Activated CD4-positive, alpha-beta T cell treated with anti-CD3 and anti-CD28 coated beads, Interleukin-2, amount 10 ng/mL, durations not matched to agents 24 days and 14 days (primary cell): ENCODE measurements at regions of chr5 and their contacts with region 1.

Region 1: DNA sequence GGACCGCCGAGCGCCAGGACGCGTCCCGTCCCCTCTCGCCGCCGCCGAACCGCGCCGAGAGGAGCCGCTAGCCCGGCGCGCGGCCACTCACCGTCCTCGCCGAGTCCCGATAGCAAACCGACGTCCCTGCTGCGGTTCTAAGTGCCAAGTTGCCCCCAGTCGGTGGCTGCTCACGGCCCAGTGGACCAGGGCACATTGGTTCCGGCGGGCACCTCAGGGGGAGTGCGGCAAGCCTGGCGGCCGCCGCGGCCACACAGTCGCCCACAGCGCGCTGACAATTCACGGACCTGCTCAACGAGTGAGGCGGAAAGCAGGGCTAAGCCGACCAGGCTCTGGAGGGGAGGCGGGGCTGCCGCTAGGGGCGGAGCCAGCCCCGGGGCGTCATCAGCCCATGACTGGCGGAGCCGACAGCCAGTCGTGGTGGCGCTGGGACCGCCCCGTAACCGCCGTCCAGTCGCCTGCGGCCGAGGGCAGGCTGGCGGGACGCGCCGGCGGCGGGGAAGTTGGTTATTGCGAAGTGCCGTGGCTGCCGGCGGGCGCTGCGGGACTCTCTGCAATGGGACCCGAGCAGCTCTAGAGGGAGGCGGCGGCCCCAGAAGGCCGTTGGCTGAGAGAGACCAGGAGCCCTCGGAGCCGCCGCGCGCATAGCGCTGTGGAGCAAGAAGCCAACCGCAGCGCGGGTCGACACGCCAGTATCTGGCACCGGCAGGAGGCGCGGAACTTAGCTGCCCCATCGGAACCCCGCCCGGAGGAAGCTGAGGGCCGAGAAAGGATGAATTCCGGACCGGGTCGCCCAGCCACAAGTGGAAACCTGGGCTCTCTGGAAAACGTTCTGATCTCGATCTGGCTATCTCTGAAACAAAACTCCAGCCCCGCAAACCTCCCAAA is at the start of gene MARCHF3:
- DNase-seq: peak; percentile 99
- H3K4me3 Mint-ChIP-seq: peak within 1 kb of the TSS; percentile 92
- H3K27ac Mint-ChIP-seq: peak within 1 kb of the TSS; percentile 75
- H3K4me1 Mint-ChIP-seq: peaks cover 10% of the 10 kb centered on the region
- H3K27me3 Mint-ChIP-seq: peaks cover 37% of the 10 kb centered on the region
- total RNA-seq, gene MARCHF3: 2.3 and 4.2 TPM in 2 replicates

Region 2: DNA sequence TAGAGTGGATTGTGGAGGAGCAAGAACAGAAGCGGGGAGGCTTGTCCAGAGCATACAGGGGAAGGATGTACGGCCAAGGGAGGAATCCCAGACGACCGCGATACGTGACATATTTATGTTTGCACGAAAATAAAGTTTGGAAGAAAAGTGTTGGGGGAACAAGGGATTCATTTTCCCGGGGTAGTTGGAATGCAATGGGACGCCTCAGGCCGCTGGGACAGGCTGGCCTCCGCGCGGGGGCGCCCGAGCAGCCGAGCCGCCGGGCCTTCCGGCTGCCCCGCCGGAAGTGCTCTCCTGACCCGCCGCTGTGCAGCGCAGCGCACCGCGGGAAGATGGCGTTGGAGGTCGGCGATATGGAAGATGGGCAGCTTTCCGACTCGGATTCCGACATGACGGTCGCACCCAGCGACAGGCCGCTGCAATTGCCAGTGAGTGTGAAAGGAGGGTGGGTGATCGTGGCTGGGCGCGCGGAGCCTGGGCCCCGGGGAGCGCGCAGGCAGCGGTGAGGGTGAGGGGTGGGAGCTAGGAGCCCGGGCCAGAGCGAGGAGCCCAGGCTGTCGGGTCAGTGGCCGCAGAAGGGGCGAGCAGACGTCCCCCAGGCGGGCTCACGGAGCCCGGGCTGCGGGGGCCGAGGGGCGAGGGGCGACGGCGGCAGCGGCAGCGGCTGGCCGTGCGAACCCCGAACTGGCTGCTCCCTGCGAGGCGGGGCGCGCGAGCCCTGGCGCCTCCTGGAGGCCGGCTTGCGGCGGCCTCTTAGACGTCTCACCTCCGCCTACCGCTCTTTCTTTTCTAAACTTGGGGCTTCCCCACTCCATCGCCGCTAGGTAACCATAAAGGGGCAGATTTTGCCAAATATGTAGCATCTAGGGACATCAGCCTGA is 429.6 kb before region 1 on chr5 and contains the start of gene PHAX:
- intact Hi-C with region 1: loop called (anchors 2 kb)
- DNase-seq: peak; percentile 94
- H3K4me3 Mint-ChIP-seq: peak within 1 kb of the TSS; percentile 96
- H3K27ac Mint-ChIP-seq: peak within 1 kb of the TSS; percentile 98
- H3K4me1 Mint-ChIP-seq: peaks cover 24% of the 10 kb centered on the region
- H3K27me3 Mint-ChIP-seq: peaks cover 11% of the 10 kb centered on the region
- total RNA-seq, gene PHAX: 50.2 and 51.7 TPM in 2 replicates

Region 3: GRCh38 chr5:126745259-126745992 is 285.1 kb before region 1 on chr5:
- intact Hi-C with region 1: loop called (anchors 1 kb)
- DNase-seq: no peak
- H3K4me3 Mint-ChIP-seq: no peak overlapping the region
- H3K27ac Mint-ChIP-seq: no peak overlapping the region
- H3K4me1 Mint-ChIP-seq: peaks cover 37% of the 10 kb centered on the region
- H3K27me3 Mint-ChIP-seq: no peaks in the 10 kb centered on the region

Region 4: DNA sequence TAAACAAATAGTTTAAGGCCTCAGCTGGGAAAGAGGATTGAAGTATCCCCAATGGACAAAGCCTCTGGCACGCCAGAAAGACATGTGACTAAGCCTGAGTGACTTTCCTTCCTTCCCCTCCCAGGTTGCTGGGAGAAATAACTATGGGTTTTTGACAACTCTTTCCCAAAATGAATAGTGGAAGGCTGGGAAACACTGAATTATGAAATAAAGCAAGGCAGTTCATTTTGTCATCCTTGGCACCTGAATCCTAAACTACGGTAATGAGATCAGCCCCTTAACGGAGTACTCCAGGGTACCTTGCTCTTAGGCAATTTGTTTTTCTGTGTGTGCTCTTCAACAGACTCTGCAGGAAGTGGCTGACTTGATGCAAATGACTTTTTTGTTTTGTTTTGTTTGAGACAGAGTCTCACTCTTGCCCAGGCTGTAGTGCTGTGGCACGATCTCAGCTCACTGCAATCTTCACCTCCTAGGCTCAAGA is 178.4 kb before region 1 on chr5:
- intact Hi-C with region 1: loop called (anchors 5 kb)
- DNase-seq: peak; percentile 80
- H3K4me3 Mint-ChIP-seq: peak overlapping the region; percentile 76
- H3K27ac Mint-ChIP-seq: peak overlapping the region; percentile 86
- H3K4me1 Mint-ChIP-seq: peaks cover 45% of the 10 kb centered on the region
- H3K27me3 Mint-ChIP-seq: no peaks in the 10 kb centered on the region

Region 5: GRCh38 chr5:127072861-127073846 is 42.7 kb after region 1 on chr5 and contains the start of gene C5orf63:
- intact Hi-C with region 1: loop called (anchors 1 kb)
- DNase-seq: peak; percentile 91
- H3K4me3 Mint-ChIP-seq: peak within 1 kb of the TSS; percentile 91
- H3K27ac Mint-ChIP-seq: peak within 1 kb of the TSS; percentile 90
- H3K4me1 Mint-ChIP-seq: peaks cover 18% of the 10 kb centered on the region
- H3K27me3 Mint-ChIP-seq: no peaks in the 10 kb centered on the region
- total RNA-seq, gene C5orf63: 5.6 and 5.7 TPM in 2 replicates